ENCODE measurements at regions of chr6 and their contacts with region 1.

Region 1: DNA sequence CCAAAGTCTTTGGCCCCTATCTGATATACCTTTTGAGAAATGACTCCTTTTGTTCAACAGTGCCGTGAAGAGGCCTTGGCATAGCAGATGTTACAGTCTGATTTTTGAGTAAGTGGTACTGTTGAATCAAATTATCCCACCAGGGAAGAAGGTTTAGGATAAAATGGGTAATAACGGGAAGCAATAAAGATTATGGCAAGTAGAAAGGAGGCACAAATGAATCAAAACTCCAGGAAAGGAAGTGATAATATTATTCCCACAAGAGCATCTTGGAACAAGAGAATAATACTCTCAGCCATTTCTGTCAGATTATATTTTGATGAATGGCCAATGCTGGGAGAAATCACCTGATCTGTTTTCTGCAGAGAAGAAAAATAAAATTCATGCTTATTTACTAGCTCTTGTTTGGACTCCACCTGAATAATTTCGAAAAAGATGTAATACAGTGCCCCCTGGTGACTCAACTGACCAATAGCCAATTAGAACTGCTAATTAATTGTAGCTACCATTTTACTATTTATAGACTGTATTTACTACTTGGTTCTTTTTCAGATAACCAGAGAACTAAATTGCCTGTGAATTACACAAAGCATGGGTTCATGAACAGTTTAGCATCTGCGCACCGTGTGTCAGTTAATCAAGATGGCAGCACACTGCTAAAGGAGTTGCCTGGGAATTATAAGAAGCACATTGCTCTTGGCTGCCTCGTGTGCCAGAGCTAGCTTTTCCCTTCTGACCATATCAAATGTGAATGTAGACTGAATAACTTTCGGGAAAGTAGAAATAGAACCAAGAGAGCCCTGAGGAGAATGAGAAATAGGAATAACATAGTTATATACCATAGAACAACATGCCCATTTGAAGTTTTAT is 78.5 kb upstream of the TRDN start:
- DNase-seq: peak; percentile 62

Region 2: GRCh38 chr6:123415844-123416468 is 299.3 kb before region 1 on chr6:
- in situ Hi-C with region 1: loop called (anchors 25 kb)
- DNase-seq: peak; percentile 72

Region 3: DNA sequence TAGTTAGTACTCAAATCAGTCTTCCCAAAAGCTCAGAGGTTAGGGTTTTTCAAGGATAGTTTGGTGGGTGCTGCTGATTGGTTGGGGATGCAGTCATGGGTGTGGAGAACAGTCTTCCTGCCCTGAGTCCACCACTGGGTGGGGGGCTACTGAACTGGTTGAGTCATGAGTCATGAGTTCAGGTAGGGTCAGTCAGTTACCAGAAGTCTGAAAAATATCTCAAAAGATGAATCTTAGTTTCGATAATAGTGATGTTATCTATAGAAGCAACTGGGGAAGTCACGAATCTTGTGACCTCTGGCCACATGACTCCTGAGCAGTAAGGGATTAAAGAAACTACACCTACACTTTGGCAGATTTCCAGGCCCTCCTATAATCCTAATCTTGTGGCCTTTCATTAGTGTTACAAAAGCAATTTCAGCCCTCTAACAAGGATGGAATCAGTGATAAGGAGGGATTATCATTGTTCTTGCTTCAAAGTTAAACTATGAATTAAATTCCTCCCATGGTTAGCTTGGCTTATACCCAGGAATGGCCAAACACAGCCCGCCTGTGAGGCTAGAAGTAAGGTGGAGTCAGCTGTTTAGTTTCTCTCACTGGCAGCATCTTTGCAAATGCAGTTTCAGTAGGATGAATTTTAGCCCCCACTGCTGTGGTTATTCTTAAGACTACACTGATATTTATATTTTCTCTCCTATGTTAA is 55.2 kb after region 1 on chr6:
- in situ Hi-C with region 1: no loop called
- DNase-seq: no peak

Region 4: DNA sequence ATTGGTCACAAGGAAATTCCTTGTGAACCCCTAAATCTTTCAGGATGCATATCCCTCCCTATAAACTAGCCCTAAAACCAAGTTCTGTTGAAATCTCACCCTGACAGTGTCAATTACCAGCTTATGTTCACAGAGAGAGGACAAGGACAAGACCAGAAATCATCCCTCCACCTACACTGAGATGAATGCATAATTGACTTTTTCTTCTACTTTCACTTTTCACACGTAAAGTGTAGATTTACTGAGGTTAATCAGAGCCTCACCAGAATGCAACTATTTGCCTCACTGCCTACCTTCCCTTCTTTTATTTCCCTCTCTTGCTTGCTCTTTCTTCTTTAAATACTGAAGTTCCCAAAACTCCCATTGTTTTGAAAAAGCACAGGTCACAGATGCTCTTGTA is 73.1 kb after region 1 on chr6:
- in situ Hi-C with region 1: no loop called
- DNase-seq: no peak